AG04450 (cell line): ENCODE measurements at regions of chr2 and their contacts with region 1.

Region 1: GRCh38 chr2:190343500-190344275 is at the start of gene INPP1:
- DNase-seq: no peak
- H3K4me3 ChIP-seq: peak within 1 kb of the TSS; percentile 76
- H3K27ac ChIP-seq: no peak within 1 kb of the TSS
- H3K27me3 ChIP-seq: no peaks in the 10 kb centered on the region
- CTCF ChIP-seq: no peak
- polyA plus RNA-seq, gene INPP1: 13.7 and 14.5 TPM in 2 replicates

Region 2: GRCh38 chr2:189836657-189837056 is 507.0 kb before region 1 on chr2:
- CTCF ChIA-PET with region 1: no interaction called
- POLR2A ChIA-PET with region 1: interaction called, 11 read pairs
- DNase-seq: peak; percentile 59
- H3K4me3 ChIP-seq: no peak overlapping the region
- H3K27ac ChIP-seq: no peak overlapping the region
- H3K27me3 ChIP-seq: no peaks in the 10 kb centered on the region
- CTCF ChIP-seq: no peak

Region 3: DNA sequence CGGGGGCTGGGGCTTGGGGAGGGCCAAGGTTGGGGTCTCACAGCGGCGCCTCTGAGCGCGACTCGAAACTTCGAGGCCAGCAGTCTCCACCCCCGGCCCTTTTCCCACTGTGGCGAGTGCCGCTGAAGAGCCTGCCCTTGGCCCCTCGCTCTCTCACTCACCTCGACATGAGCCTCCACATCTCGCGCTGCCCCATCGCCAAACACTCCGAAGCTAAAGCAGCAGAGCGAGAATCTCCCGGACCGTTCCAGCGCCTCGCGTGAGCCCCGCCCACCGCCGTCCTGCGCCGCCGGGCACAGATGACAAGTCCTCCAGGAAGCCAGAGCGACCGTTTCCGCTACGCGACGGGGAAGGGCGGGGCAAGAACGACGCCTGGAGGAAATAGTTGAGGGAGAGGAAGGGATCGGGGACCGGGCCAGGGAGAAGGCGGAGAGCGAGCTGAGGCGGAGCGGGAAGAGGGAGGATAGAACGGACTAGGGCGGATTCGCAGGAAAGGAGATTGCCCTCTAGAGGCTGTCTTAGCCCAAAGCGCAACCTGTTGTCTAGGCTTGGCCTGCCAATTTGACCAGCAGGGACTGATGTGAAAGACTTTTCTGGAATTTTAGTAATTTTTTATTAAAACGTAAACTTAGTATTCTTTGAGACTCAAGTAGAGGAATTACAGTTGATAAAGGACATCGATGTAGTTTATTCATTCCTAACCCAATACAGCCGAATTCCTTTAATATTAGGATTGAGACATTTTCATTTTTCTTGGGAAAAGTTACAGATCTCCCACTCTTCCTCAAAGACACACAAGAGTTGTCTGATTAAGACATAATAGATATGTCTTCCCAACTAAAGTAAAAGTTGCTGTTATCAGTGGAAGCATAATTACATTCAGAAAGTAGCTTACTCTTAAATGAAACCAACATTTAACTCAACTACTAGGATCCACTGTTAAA is 23.9 kb before region 1 on chr2 and contains the start of gene HIBCH:
- CTCF ChIA-PET with region 1: interaction called, 10 read pairs
- POLR2A ChIA-PET with region 1: interaction called, 5 read pairs
- DNase-seq: peak; percentile 95
- H3K4me3 ChIP-seq: peak within 1 kb of the TSS; percentile 83
- H3K27ac ChIP-seq: peak within 1 kb of the TSS; percentile 41
- H3K27me3 ChIP-seq: no peaks in the 10 kb centered on the region
- CTCF ChIP-seq: peak; percentile 93
- polyA plus RNA-seq, gene HIBCH: 16.9 and 23.8 TPM in 2 replicates

Region 4: DNA sequence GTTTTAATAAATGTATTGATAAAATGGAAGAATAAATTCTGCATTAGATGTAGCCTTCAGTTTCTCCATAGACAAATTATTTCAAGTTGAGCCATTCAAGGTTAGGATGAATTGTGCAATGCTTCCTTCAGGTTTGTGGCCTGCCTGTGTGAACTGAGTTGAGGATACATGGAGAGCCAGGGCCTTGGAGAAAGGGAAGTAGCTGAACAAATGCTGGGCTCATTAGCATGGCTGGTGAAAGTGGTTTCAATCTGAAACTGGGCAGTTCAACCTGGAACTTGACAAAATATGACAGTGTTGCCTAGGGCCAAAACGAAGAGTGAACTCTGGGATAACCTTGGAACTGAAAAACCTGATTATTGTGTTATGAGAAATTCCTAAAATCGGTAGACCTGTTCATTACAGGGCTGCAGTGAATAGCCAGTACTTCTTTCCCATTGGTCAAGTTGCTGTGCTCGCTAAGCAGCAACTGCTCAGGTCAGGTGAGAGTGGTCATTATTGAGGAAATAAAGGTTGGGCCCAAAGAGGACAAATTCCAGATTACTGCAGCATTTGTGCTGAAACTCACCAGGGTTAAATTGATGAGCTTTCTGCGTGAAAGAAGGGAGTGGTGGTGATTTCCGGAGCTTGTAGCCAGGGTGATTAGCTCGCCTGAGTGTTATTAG is 12.4 kb after region 1 on chr2:
- CTCF ChIA-PET with region 1: interaction called, 15 read pairs
- POLR2A ChIA-PET with region 1: no interaction called
- DNase-seq: no peak
- H3K4me3 ChIP-seq: no peak overlapping the region
- H3K27ac ChIP-seq: no peak overlapping the region
- H3K27me3 ChIP-seq: no peaks in the 10 kb centered on the region
- CTCF ChIP-seq: no peak

Region 5: DNA sequence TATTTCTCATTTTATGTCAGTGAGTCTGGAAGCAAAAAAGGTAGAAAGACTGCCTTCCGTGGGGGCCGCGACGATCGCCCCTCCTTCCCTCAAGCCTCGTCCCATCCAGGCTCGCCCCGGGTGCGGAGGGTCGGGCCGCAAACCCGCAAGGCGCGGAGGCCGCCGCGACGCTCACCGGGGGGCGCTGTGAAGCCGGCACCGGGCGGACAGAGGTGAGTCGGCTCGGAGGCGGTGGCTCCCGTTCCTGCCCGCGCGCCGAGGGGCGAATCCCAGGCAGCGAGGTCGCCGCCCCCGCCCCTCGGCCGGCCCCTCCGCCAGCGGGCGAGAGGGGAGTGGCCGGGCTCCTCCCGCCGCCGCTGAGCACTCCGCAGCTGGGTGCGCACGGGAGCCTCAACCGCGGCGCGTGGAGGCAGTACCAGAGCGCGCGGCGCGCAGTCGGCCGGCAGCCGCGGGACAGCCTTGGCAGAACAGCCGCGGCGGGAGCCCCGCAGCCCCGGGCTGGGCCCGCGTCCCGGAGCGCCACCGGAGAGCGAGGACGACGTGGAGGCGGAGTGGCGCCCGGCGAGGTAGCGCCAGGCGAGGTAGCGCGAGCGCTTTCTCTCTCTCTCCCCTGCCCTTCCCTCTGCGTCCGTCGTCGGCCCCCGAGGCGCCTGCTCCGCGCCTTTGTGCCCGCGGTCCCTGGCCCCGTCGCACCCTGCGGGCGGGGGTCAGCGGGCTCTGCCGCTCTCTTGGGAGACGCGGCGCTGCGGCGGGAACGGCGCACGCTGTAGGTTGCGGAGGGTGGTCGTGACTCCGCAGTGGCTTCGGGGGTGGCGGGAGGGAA is 901.6 kb after region 1 on chr2 and contains the start of gene MYO1B:
- CTCF ChIA-PET with region 1: no interaction called
- POLR2A ChIA-PET with region 1: no interaction called
- DNase-seq: peak; percentile 33
- H3K4me3 ChIP-seq: peak within 1 kb of the TSS; percentile 91
- H3K27ac ChIP-seq: peak within 1 kb of the TSS; percentile 80
- H3K27me3 ChIP-seq: no peaks in the 10 kb centered on the region
- CTCF ChIP-seq: peak; percentile 48
- polyA plus RNA-seq, gene MYO1B: 110 and 149 TPM in 2 replicates